GM10248 (cell line): ENCODE measurements at regions of chr22 and their contacts with region 1.

Region 1: GRCh38 chr22:50276143-50276542 is 6.0 kb upstream of the MAPK11 start:
- DNase-seq: peak; percentile 65
- CTCF ChIP-seq: peak; percentile 68

Region 2: GRCh38 chr22:50180727-50181712 is 95.1 kb before region 1 on chr22:
- CTCF ChIA-PET with region 1: no interaction called
- POLR2A ChIA-PET with region 1: no interaction called
- DNase-seq: no peak
- CTCF ChIP-seq: no peak

Region 3: DNA sequence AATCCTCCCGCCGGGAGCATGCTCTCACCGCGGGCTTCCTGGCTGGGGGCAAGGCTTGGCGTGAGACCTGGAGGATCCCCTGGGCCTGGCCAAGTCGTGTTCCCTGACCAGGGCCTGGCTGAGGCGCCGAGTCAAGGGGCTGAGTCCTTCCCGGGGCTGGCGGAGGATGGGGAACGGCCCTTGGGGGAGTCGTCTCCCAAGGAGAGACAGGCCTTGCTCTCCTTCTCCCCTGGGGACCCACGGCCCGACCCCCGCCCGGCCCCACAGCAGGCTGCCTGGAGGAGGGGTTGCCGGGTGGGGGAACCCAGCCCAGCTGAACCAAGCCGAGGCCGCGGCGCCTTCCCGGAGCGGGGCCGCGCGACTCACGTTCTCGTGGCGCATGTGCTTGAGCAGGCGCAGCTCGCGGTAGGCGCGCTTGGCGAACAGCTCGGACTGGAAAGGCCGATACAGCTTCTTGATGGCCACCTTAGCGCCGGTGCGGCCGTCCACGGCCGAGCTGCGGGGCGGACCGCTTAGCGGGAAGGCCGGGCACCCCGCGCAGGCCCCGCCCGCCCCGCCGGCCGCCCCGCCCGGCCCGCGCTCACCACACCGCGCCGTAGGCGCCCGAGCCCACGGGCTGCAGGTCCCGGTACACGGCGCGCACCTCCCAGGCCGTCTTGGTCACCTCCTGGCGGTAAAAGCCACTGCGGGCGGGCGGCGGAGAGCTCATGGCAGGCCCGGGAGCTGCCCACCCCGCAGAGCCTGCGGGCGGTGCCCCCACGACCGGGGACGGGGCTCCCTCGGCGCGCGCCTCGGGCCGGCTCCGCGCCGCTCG is 15.1 kb before region 1 on chr22:
- CTCF ChIA-PET with region 1: interaction called, 40 read pairs
- POLR2A ChIA-PET with region 1: no interaction called
- DNase-seq: peak; percentile 73
- CTCF ChIP-seq: no peak

Region 4: DNA sequence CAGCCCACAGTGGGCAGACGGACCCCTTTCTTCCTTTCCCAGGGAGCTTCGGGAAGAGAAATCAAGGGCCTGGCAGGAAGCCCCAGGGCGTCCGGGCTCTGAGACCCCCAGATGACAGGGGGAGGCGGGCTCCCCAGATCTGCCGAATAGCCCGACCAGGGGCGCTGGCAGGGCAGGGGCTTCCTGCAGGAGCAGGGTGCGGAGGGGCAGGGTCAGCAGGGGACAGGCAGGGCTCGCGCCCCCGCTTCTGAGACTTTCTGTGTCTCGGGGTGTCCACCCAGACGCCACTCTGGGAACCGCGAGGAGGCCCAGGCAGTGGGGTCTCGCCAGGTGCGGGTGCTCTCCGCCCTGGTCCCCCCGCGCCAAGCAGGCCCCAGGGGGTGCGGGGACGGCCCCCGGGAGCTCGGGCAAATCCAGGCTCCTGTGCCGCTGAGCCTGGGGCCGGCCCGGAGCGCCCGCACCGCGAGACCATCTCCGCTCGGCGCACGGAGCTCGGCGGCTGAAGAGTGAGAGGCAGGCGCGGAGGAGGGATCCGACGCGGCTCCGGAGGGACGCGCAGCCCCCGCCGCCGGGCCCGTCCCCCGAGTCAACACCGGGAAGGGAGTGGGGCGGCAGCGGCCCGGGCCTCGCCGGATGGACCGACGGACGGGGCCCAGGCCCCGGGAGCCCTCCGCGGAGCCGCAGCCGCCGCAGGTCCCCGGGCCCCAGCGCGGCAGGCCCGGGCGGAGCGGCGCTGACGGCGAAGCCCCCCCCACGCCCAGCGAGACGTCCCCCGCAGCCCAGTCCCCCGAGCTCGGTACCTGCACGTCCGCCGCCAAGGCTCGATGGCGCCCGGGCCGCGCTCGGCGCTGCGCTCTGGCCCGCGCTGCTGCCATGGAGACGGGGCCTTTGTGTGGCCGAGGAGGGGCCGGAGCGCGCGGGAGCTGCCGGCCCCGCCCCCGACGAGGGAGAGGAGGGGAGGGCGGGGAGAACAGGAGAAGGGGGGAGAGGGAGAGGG is 30.9 kb after region 1 on chr22 and contains the start of gene PLXNB2:
- CTCF ChIA-PET with region 1: interaction called, 66 read pairs
- POLR2A ChIA-PET with region 1: no interaction called
- DNase-seq: peak; percentile 89
- CTCF ChIP-seq: no peak

Region 5: DNA sequence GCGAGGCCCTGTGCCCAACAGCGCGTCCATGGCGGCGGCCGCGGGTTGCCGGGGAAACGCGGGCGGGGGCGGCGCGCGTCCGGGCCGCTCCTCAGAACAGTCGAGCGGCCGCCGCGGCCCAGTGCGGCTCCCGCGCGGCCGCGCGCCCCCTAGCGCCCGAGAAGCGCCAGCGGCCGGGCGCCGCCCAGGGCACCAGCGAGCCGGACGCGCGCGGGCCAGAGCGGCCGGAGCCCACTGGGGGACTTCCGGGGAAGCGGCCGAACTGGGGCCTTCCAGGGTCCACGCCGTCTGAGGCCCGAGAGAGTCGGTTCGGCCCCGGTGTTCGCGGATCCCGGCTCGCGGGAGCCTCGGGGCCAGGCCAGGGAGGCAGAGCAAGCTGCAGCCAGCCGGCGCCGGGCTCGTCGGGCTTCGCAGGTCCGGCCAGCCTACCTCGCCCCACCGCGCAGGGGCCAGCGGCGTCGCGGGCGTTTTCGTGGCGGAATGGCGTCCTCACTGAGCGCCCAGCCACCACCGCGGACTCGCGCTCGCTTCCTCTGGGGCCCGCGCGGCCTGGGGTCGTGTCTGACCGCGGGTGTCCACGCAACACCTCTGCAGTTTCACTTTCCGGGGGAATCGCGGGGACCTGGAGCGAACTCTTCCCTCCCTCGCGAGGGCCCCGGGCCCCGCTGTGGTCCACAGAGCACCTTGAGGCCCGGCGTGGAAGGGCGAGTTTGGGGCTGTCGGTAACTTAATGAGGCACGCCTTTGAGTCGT is 51.0 kb after region 1 on chr22 and contains the start of gene DENND6B:
- CTCF ChIA-PET with region 1: interaction called, 96 read pairs
- POLR2A ChIA-PET with region 1: no interaction called
- DNase-seq: peak; percentile 93
- CTCF ChIP-seq: peak; percentile 72

Region 6: DNA sequence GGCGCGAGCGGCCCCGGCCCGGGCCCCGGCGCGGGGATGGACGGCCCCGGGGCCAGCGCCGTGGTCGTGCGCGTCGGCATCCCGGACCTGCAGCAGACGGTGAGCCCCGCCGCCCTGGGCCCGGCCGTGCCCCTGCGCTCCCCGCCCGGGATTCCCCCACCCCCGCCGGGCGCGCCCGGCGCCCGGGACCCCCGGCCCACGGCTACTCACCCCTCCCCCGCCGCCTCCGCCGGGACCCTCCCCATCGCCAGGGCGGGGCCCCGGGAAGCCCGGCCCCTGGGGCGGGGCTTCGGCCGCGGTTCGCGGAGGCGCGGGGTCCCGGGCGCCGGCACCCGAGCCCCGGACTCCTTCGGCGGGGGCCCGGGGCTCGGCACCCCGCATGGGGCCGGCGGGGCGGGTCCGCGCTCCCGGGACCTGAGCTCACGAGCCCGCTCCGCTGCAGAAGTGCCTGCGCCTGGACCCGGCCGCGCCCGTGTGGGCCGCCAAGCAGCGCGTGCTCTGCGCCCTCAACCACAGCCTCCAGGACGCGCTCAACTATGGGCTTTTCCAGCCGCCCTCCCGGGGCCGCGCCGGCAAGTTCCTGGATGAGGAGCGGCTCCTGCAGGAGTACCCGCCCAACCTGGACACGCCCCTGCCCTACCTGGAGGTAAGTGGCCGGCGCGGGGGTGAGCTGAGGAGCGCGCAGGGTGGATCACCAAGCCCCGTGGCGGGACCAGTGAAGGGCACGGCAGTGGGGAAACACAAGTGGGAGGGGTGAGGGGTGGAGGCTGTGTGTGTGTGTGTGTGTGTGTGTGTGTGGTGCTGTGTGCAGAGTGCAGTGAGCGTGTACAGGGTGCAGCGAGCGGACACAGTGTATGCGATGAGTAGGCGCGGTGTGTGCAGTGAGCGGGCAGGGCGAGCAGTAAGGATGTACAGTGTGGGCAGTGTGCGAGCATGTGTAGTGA is 398.7 kb after region 1 on chr22:
- CTCF ChIA-PET with region 1: no interaction called
- POLR2A ChIA-PET with region 1: no interaction called
- DNase-seq: peak; percentile 38
- CTCF ChIP-seq: no peak